Cardiac septum (tissue), 1 donor: ENCODE measurements at regions of chr12 and their contacts with region 1.

Region 1: GRCh38 chr12:14845350-14845750 is 2.0 kb upstream of the ART4 start:
- DNase-seq: no peak

Region 2: GRCh38 chr12:14577344-14577743 is 268.0 kb before region 1 on chr12:
- intact Hi-C with region 1: no loop called
- DNase-seq: no peak

Region 3: GRCh38 chr12:14769969-14770495 is 75.3 kb before region 1 on chr12:
- intact Hi-C with region 1: loop called (anchors 2 kb)
- DNase-seq: peak; percentile 92

Region 4: GRCh38 chr12:14952299-14952921 is 107.1 kb after region 1 on chr12:
- intact Hi-C with region 1: loop called (anchors 5 kb)
- DNase-seq: no peak

Region 5: DNA sequence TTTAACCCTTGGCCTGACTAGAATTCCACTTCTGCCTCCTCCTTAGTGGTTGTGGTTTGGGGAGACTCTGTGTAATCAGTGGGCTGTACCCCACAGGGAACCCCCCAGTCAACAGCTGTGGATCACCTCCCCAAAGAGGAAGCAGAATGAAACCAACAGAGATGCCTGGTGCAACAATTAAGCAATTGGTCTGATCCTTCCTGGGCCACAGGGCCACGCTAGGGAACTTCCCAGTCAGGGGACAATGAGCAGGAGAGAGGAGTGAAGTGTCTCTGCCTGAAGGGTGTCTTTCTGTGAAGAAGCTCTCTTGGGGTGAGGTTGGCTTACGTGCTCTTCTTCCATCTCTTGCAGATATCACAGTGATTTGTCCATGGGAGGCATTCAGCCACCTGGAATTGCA is 135.7 kb after region 1 on chr12:
- intact Hi-C with region 1: no loop called
- DNase-seq: no peak

Region 6: GRCh38 chr12:15151161-15152120 is 306.1 kb after region 1 on chr12:
- intact Hi-C with region 1: loop called (anchors 10 kb)
- DNase-seq: no peak